Breast epithelium (tissue), 4 donors: ENCODE measurements at regions of chr12 and their contacts with region 1.

Region 1: GRCh38 chr12:30169839-30170591 is 386.3 kb upstream of the TMTC1 start:
- DNase-seq: no peak
- H3K4me3 ChIP-seq: peak overlapping the region in 1 of 3 donors; percentile 19
- H3K27ac ChIP-seq: no peak overlapping the region
- H3K4me1 ChIP-seq: no peaks in the 10 kb centered on the region
- H3K27me3 ChIP-seq: peaks cover 0 to 14% of the 10 kb centered on the region in 2 donors
- CTCF ChIP-seq: no peak
- POLR2A ChIP-seq: no peak

Region 2: DNA sequence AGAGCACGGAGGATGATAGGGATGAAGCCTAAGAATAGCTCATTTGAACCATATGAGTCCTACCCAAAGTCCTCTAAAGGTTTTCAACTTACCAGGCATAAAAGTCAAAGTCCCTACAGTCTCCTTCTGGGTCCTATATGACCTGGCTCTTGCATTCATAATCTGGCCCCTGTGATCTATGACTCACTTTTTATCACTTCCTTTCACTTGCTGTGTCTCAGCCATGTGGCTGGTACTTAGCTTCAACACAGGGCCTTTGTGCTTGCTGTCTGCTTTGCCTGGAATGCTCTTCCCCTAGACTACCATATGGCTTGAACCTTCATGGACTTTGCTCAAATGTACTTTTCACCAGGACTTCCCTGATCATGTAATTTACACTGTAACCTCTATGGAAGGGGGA is 248.7 kb before region 1 on chr12:
- intact Hi-C with region 1: no loop called
- DNase-seq: no peak
- H3K4me3 ChIP-seq: no peak overlapping the region
- H3K27ac ChIP-seq: no peak overlapping the region
- H3K4me1 ChIP-seq: no peaks in the 10 kb centered on the region
- H3K27me3 ChIP-seq: no peaks in the 10 kb centered on the region
- CTCF ChIP-seq: no peak
- POLR2A ChIP-seq: no peak

Region 3: DNA sequence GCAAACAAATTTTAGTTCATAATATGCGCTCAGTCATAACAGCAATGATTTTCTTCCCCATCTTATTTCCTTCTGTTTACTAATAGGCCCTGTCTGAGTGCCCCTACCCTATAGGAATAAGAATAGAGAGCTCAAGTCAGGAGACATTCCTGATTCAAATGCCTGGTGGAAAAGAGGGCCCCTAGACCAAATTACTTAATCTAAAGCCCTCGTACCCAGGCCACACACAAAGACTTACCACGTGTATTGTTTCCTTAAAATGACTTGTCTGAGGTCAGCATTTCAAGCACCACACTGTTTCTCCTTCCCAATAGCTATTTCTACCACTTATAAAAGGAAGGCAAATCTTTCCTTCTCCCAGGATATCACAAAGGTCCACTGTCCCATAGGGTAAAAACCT is 71.3 kb before region 1 on chr12:
- intact Hi-C with region 1: loop called (anchors 2 kb)
- DNase-seq: no peak
- H3K4me3 ChIP-seq: no peak overlapping the region
- H3K27ac ChIP-seq: no peak overlapping the region
- H3K4me1 ChIP-seq: no peaks in the 10 kb centered on the region
- H3K27me3 ChIP-seq: no peaks in the 10 kb centered on the region
- CTCF ChIP-seq: no peak
- POLR2A ChIP-seq: no peak

Region 4: GRCh38 chr12:30197392-30198047 is 27.5 kb after region 1 on chr12:
- intact Hi-C with region 1: no loop called
- DNase-seq: no peak
- H3K4me3 ChIP-seq: no peak overlapping the region
- H3K27ac ChIP-seq: no peak overlapping the region
- H3K4me1 ChIP-seq: no peaks in the 10 kb centered on the region
- H3K27me3 ChIP-seq: peaks cover 0 to 10% of the 10 kb centered on the region in 2 donors
- CTCF ChIP-seq: no peak
- POLR2A ChIP-seq: no peak

Region 5: DNA sequence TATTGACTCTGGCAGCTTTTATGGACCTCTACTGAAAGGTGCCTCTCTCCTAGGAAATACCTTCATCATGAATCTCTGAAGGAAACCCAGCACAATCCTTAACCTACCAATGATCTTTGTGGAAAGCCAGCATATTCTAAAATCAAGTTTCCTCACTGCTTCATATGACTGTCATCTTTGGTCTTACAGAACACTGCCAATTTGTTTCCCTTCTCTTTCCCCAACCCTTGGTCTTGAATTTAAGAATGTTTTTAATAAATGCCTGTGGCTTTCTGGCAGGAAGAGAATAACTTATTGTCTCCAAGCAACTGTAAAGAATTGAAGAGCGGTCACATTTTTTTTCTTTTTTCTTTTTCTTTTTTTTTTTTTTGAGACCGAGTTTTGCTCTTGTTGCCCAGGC is 98.0 kb after region 1 on chr12:
- intact Hi-C with region 1: no loop called
- DNase-seq: no peak
- H3K4me3 ChIP-seq: no peak overlapping the region
- H3K27ac ChIP-seq: no peak overlapping the region
- H3K4me1 ChIP-seq: no peaks in the 10 kb centered on the region
- H3K27me3 ChIP-seq: no peaks in the 10 kb centered on the region
- CTCF ChIP-seq: no peak
- POLR2A ChIP-seq: no peak

Region 6: GRCh38 chr12:31250179-31250578 is 1080.2 kb after region 1 on chr12:
- intact Hi-C with region 1: no loop called
- DNase-seq: no peak
- H3K4me3 ChIP-seq: no peak overlapping the region
- H3K27ac ChIP-seq: no peak overlapping the region
- H3K4me1 ChIP-seq: no peaks in the 10 kb centered on the region
- H3K27me3 ChIP-seq: no peaks in the 10 kb centered on the region
- CTCF ChIP-seq: no peak
- POLR2A ChIP-seq: no peak